Naive thymus-derived CD8-positive, alpha-beta T cell (primary cell): ENCODE measurements at regions of chr21 and their contacts with region 1.

Region 1: DNA sequence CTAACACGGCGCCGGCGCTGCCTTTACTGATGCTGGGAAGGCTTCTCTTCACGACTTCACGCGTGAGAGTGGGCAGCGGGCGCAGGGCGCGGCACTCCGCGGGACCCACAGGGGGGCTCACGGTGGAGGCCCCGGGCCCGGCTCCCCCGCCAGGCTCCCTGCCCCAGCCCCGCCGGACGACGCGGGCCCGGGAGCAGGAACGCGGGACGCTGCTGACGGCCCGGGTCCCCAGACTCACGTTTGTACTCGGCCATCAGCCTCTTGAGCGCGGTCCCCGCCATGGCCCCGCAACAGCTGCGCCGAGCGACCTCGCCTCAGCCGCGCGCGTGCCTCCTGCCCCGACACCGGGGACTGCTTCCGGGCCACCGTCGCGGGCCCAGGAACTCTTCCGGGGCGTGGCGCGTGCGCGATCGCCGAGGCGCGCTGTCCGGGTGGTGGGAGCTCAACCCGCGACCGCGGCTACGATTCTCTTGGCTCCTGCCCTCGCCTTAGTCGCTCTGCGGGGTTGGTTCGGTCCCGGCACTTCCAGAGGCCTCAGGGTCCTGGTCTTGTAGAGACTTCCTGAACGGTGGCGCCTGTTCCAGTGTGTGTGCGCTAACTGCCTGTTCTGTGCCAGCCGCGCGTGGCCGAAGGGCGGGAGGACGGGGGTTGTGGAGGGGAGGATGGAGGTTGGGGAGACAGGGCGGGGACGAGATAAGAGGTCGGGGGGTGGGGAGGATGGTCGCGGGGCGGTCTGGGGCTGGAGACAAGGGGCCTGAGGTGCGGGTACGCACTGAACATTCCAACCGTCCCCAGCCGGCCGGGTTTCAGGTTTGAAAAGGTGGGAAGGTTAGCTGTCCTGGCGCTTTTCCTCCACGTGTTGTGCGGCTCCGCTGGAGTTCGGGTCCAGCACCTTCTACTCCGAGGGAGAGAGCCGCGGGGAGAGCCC is at the start of gene UBE2G2:
- DNase-seq: peak; percentile 77 to 92 (median 88)
- ATAC-seq: peak; percentile 91 to 93
- H3K4me3 Mint-ChIP-seq: peak within 1 kb of the TSS; percentile 92 to 99 (median 97)
- H3K27ac Mint-ChIP-seq: peak within 1 kb of the TSS; percentile 64 to 99 (median 95)
- H3K4me1 Mint-ChIP-seq: peaks cover 23 to 53% (median 46%) of the 10 kb centered on the region in 4 donors
- H3K27me3 Mint-ChIP-seq: no peaks in the 10 kb centered on the region
- polyA plus RNA-seq, gene UBE2G2: 56.2 to 72.8 (median 62.3) TPM

Region 2: GRCh38 chr21:44626262-44626661 is 175.5 kb before region 1 on chr21:
- POLR2A ChIA-PET with region 1: no interaction called
- DNase-seq: peak in 3 of 10 donors; percentile 18 to 32 (median 32)
- ATAC-seq: no peak
- H3K4me3 Mint-ChIP-seq: peak overlapping the region in 4 of 10 donors; percentile 28 to 65 (median 58)
- H3K27ac Mint-ChIP-seq: peak overlapping the region in 6 of 10 donors; percentile 43 to 75 (median 58)
- H3K4me1 Mint-ChIP-seq: peaks cover 21 to 52% (median 43%) of the 10 kb centered on the region in 4 donors
- H3K27me3 Mint-ChIP-seq: peaks cover 0 to 2% (median 0%) of the 10 kb centered on the region in 5 donors

Region 3: DNA sequence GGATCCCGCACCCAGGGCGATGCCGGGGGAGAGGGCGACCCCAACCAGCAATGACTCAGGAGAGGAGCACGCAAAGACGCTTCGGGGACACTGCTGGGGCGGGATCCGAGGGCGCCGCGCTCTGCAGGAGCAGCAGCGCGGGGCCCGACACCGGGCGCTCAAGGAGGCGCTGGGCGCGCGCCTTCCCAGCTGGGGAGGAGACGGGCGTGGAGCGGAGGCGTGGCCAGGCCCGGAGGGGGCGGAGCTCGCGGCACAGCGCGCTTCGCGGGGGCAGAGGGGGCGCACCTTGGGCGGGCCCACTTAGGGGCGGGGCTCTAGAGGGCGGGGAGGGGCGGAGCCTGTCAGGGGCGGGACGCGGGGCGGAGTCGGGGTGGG is 15.8 kb after region 1 on chr21:
- POLR2A ChIA-PET with region 1: interaction called, 20 read pairs
- DNase-seq: peak; percentile 87 to 97 (median 92)
- ATAC-seq: peak; percentile 81 to 84
- H3K4me3 Mint-ChIP-seq: peak overlapping the region; percentile 33 to 80 (median 68)
- H3K27ac Mint-ChIP-seq: peak overlapping the region in 3 of 10 donors; percentile 29 to 65 (median 29)
- H3K4me1 Mint-ChIP-seq: peaks cover 10 to 28% (median 13%) of the 10 kb centered on the region in 4 donors
- H3K27me3 Mint-ChIP-seq: no peaks in the 10 kb centered on the region